ENCODE measurements at regions of chr20 and their contacts with region 1.

Region 1: GRCh38 chr20:3795511-3796468 is at the start of gene CDC25B:
- DNase-seq: peak; percentile 93 to 96 (median 94)
- ATAC-seq: peak; percentile 93 to 97 (median 95)
- H3K4me3 ChIP-seq: peak within 1 kb of the TSS; percentile 38 to 94 (median 76)
- H3K27ac ChIP-seq: peak within 1 kb of the TSS; percentile 90 to 99 (median 96)
- H3K4me1 ChIP-seq: peaks cover 0 to 45% (median 14%) of the 10 kb centered on the region in 12 donors
- H3K27me3 ChIP-seq: no peaks in the 10 kb centered on the region
- CTCF ChIP-seq: peak in 9 of 12 donors; percentile 22 to 46 (median 32)
- POLR2A ChIP-seq: peak in 1 of 2 donors; percentile 44
- total RNA-seq, gene CDC25B: 4.0 to 30.4 (median 8.6) TPM

Region 2: DNA sequence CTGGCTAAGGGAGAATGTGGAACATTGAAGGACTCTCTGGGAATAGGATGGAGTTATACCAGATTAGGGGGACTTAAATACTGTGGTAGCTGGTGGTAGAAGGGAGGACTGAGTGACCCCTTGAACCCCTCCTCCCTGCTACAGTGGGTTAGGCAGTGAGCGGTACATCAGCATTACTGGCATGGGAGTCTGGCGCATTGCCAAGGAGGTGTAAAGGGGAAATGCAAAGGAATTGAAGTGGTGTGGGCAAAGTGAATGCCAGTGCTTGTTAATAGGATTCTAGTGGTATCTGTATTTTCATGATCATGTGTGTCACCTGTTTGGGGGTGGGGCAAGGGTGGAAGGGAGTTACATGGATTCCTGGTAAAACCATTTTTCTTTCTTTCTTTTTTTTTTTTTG is 192.7 kb before region 1 on chr20:
- intact Hi-C with region 1: no loop called
- DNase-seq: no peak
- ATAC-seq: no peak
- H3K4me3 ChIP-seq: no peak overlapping the region
- H3K27ac ChIP-seq: no peak overlapping the region
- H3K4me1 ChIP-seq: no peaks in the 10 kb centered on the region
- H3K27me3 ChIP-seq: no peaks in the 10 kb centered on the region
- CTCF ChIP-seq: no peak
- POLR2A ChIP-seq: no peak

Region 3: DNA sequence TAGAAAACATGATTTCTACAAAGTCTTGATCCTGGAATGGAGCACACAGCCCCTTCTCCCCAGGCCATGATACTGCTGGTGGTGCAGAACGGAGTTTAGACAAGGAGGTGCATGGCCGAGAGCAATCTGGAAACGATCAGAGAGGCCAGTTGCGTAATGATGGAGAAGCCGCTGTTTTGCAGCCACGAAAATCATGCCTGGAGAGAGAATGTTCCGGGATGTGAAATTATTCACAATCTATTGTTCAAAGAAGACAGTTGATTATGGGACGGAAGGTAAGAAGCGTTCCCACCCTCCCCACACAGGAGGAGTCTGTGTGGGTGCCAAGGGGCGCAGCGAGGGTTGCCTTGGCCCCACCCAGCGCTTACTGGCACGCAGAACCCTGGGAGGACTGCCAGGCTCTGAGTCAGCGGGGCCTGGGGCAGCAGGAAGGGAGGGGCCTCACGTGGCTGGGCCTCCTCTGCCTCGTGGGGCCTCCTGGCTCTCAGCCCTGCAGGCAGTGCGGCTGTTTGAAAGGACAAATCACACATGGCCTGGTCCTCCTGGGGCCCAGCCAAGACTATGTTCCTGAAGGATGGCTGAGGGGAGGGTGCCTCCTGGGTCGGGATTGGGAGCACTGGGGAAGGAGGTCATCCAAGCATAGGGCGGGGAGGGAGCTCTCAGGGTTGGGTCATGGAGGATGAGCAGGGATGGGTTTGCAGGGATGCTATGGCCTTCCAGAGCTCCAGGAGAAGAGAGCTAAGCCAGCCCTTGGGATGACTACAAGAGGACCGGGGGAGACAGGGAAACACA is 15.9 kb after region 1 on chr20:
- intact Hi-C with region 1: loop called in 1 of 10 experiments (anchors 2 kb)
- DNase-seq: peak; percentile 99
- ATAC-seq: peak; percentile 89 to 94 (median 92)
- H3K4me3 ChIP-seq: peak overlapping the region in 11 of 12 donors; percentile 4 to 62 (median 47)
- H3K27ac ChIP-seq: peak overlapping the region; percentile 76 to 96 (median 90)
- H3K4me1 ChIP-seq: peaks cover 14 to 75% (median 39%) of the 10 kb centered on the region in 12 donors
- H3K27me3 ChIP-seq: no peaks in the 10 kb centered on the region
- CTCF ChIP-seq: no peak
- POLR2A ChIP-seq: peak in 1 of 2 donors; percentile 75

Region 4: DNA sequence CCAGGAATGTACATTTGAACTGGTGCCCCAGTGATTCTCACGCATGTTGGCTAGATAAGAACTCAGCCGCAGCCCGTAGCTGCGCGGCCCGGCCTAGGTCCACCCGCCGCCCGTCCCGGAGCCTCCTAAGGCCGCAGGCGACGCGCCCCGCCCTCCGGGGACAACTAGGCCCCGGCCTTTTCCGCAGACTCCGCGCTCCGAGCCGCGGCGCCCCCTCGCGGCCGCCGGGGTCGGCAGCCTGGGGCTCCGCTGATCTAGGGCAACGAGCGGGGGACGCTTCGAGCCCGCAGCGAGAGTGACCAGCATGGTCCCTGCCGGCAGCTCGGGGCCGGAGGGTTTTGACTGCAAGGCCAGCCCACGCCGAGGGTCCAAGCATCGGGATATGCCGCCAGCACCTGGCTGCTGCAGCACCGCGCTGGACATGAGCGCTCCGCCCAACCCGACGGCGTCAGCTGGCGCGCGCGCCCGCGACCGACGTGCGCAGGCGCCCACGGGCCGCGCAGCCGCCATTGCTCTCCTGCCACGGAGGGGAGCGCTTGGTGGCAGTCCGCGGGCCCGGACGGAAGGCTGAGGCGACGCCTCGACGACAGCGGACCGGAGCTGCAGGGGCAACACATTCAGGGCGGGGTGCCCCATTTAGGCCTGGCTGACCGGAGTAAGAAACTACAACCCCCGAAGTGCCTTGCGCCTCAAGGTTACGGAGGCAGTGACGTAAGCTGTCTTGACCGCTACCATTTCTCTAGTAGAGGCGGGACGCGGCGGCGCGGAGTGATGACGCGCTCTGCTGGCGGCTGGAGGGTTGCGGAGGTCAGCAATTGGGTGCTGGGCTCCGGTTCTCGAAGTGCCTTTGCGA is 24.5 kb after region 1 on chr20 and contains the start of gene AP5S1:
- intact Hi-C with region 1: loop called in 4 of 10 experiments (anchors 2 kb)
- DNase-seq: peak; percentile 97 to 98 (median 98)
- ATAC-seq: peak; percentile 80 to 94 (median 92)
- H3K4me3 ChIP-seq: peak within 1 kb of the TSS; percentile 48 to 95 (median 67)
- H3K27ac ChIP-seq: peak within 1 kb of the TSS; percentile 93 to 99 (median 98)
- H3K4me1 ChIP-seq: peaks cover 3 to 42% (median 23%) of the 10 kb centered on the region in 12 donors
- H3K27me3 ChIP-seq: no peaks in the 10 kb centered on the region
- CTCF ChIP-seq: peak; percentile 94 to 100 (median 100)
- POLR2A ChIP-seq: peak in 1 of 2 donors; percentile 61
- total RNA-seq, gene AP5S1: 10.5 to 18.6 (median 12.0) TPM

Region 5: GRCh38 chr20:3995067-3995748 is 199.4 kb after region 1 on chr20:
- intact Hi-C with region 1: no loop called
- DNase-seq: no peak
- ATAC-seq: peak in 1 of 4 donors; percentile 14
- H3K4me3 ChIP-seq: no peak overlapping the region
- H3K27ac ChIP-seq: no peak overlapping the region
- H3K4me1 ChIP-seq: peaks cover 0 to 57% (median 0%) of the 10 kb centered on the region in 12 donors
- H3K27me3 ChIP-seq: no peaks in the 10 kb centered on the region
- CTCF ChIP-seq: no peak
- POLR2A ChIP-seq: no peak